ENCODE measurements at regions of chr17 and their contacts with region 1.

Region 1: GRCh38 chr17:3865176-3865575 is 19.1 kb upstream of the NCBP3 start:
- DNase-seq: no peak
- H3K4me3 ChIP-seq: no peak overlapping the region
- H3K27ac ChIP-seq: no peak overlapping the region
- H3K4me1 ChIP-seq: no peaks in the 10 kb centered on the region
- H3K27me3 ChIP-seq: no peaks in the 10 kb centered on the region
- CTCF ChIP-seq: no peak

Region 2: DNA sequence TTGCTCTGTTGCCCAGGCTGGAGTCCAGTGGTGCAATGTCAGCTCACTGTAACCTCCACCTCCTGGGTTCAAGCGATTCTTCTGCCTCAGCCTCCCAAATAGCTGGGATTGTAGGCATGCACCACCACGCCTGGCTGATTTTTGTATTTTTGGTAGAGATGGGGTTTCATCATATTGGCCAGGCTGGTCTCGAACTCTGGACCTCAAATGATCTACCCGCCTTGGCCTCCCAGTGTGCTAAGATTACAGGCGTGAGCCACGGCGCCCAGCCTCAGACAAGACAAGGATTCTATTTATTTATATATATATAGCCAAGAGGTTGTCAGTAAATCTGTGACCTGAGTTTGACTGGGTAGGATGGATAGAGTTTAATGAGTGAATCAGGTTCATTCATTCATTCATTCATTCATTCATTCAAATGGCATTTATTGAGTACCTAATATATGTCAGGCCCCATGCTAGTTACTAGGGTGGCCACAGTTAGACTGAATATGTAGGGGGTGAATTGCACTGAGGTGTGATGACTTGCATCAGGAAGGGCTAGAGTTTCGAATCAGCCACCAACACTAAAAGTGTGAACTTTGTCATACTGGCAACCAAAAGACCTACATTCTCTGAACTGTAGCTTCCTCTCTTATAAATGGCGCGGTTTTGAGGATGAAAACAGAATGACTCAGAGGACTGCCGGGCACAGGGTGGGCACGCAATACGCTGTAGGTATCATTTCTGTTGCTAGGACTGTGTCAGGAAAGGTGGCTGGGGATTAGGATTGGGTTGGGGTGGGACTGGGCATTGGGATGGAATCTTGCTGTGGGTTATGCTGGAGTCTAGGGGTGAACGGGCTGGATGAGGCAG is 102.0 kb before region 1 on chr17:
- intact Hi-C with region 1: no loop called
- DNase-seq: no peak
- H3K4me3 ChIP-seq: no peak overlapping the region
- H3K27ac ChIP-seq: no peak overlapping the region
- H3K4me1 ChIP-seq: no peaks in the 10 kb centered on the region
- H3K27me3 ChIP-seq: no peaks in the 10 kb centered on the region
- CTCF ChIP-seq: no peak

Region 3: GRCh38 chr17:3907483-3908216 is 42.5 kb after region 1 on chr17:
- intact Hi-C with region 1: loop called (anchors 2 kb)
- DNase-seq: no peak
- H3K4me3 ChIP-seq: no peak overlapping the region
- H3K27ac ChIP-seq: no peak overlapping the region
- H3K4me1 ChIP-seq: no peaks in the 10 kb centered on the region
- H3K27me3 ChIP-seq: no peaks in the 10 kb centered on the region
- CTCF ChIP-seq: peak; percentile 32

Region 4: GRCh38 chr17:4043862-4044261 is 178.7 kb after region 1 on chr17:
- intact Hi-C with region 1: no loop called
- DNase-seq: no peak
- H3K4me3 ChIP-seq: no peak overlapping the region
- H3K27ac ChIP-seq: no peak overlapping the region
- H3K4me1 ChIP-seq: no peaks in the 10 kb centered on the region
- H3K27me3 ChIP-seq: no peaks in the 10 kb centered on the region
- CTCF ChIP-seq: no peak